ENCODE measurements at regions of chr20 and their contacts with region 1.

Region 1: DNA sequence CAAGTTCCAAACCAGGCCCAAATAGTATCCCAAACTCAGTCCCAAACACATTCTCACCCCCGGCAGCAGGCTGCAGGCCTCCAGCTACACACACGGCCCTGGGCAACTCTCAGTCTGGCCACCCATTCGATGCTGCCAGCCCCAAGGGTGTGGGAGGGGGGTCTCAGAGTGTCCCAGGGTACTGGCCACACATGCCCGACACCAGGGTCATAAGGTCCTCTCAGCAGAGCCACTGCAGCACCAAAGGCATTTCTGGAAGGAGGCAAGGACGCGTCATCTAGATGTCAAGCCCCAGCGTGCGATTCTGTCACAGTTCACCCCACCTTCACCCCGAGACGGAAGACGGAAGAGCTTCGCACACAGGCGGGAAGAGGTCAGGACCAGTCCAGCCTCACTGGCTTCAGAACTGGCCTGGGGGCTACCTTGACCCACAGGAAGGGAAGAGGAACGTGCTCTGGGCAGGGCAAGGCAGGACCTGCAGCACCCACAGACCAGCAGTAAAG is 9.5 kb downstream of the MYL9 start:
- DNase-seq: no peak
- H3K4me3 ChIP-seq: no peak overlapping the region
- H3K27ac ChIP-seq: peak overlapping the region; percentile 5
- H3K4me1 ChIP-seq: no peaks in the 10 kb centered on the region
- H3K27me3 ChIP-seq: no peaks in the 10 kb centered on the region
- CTCF ChIP-seq: no peak

Region 2: GRCh38 chr20:36591854-36592641 is 41.2 kb after region 1 on chr20:
- CTCF ChIA-PET with region 1: interaction called, 3 read pairs
- POLR2A ChIA-PET with region 1: no interaction called
- intact Hi-C with region 1: loop called (anchors 1 kb)
- DNase-seq: peak; percentile 65
- H3K4me3 ChIP-seq: no peak overlapping the region
- H3K27ac ChIP-seq: no peak overlapping the region
- H3K4me1 ChIP-seq: peaks cover 6% of the 10 kb centered on the region
- H3K27me3 ChIP-seq: no peaks in the 10 kb centered on the region
- CTCF ChIP-seq: peak; percentile 62